Mucosa of descending colon (tissue), 3 donors: ENCODE measurements at regions of chr3 and their contacts with region 1.

Region 1: GRCh38 chr3:3200632-3201212 is 21.2 kb upstream of the CRBN start:
- DNase-seq: peak in 1 of 3 donors; percentile 50
- ATAC-seq: peak; percentile 65
- H3K4me3 ChIP-seq: no peak overlapping the region
- H3K4me1 ChIP-seq: no peaks in the 10 kb centered on the region
- CTCF ChIP-seq: peak; percentile 50

Region 2: GRCh38 chr3:3296979-3297381 is 96.3 kb after region 1 on chr3:
- intact Hi-C with region 1: no loop called
- DNase-seq: no peak
- ATAC-seq: no peak
- H3K4me3 ChIP-seq: no peak overlapping the region
- H3K4me1 ChIP-seq: no peaks in the 10 kb centered on the region
- CTCF ChIP-seq: no peak

Region 3: GRCh38 chr3:3433711-3434110 is 233.0 kb after region 1 on chr3:
- intact Hi-C with region 1: no loop called
- DNase-seq: no peak
- ATAC-seq: no peak
- H3K4me3 ChIP-seq: no peak overlapping the region
- H3K4me1 ChIP-seq: no peaks in the 10 kb centered on the region
- CTCF ChIP-seq: no peak

Region 4: GRCh38 chr3:3998140-3998922 is 797.6 kb after region 1 on chr3:
- intact Hi-C with region 1: loop called in 1 of 2 experiments (anchors 2 kb)
- DNase-seq: peak in 1 of 3 donors; percentile 55
- ATAC-seq: peak; percentile 45
- H3K4me3 ChIP-seq: no peak overlapping the region
- H3K4me1 ChIP-seq: no peaks in the 10 kb centered on the region
- CTCF ChIP-seq: no peak

Region 5: GRCh38 chr3:4052706-4053105 is 852.0 kb after region 1 on chr3:
- intact Hi-C with region 1: no loop called
- DNase-seq: no peak
- ATAC-seq: no peak
- H3K4me3 ChIP-seq: no peak overlapping the region
- H3K4me1 ChIP-seq: no peaks in the 10 kb centered on the region
- CTCF ChIP-seq: no peak

Region 6: GRCh38 chr3:4290272-4290893 is 1089.7 kb after region 1 on chr3:
- intact Hi-C with region 1: loop called (anchors 5 to 10 kb)
- DNase-seq: peak in 1 of 3 donors; percentile 64
- ATAC-seq: peak; percentile 69
- H3K4me3 ChIP-seq: no peak overlapping the region
- H3K4me1 ChIP-seq: no peaks in the 10 kb centered on the region
- CTCF ChIP-seq: peak; percentile 74